ENCODE measurements at regions of chr1 and their contacts with region 1.

Region 1: DNA sequence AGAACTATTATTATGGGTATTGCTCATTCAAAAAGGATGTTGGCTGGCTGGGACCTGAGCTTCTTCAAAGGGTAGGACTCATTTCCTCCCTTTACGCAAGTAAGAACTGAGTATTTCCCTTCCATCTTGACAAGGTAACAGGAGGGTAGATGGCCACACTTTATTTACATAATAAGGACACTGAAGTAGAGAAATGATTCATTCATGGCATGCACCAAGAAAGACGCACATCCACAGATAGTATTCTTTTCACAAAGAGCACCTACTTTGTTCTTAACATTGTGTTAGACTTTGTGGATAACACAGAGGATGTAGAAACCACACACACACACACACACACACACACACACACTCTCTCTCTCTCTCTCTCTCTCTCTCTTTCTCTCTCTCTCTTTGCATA is 82.9 kb downstream of the FAM78B start:
- DNase-seq: peak in 3 of 5 donors; percentile 16 to 30 (median 23)
- H3K4me3 ChIP-seq: no peak overlapping the region
- H3K4me3 Mint-ChIP-seq: peak overlapping the region; percentile 14 to 76 (median 63)
- H3K27ac ChIP-seq: no peak overlapping the region
- H3K27ac Mint-ChIP-seq: peak overlapping the region in 5 of 7 donors; percentile 2 to 92 (median 68)
- H3K4me1 ChIP-seq: peaks cover 43% of the 10 kb centered on the region
- H3K4me1 Mint-ChIP-seq: peaks cover 36 to 66% (median 43%) of the 10 kb centered on the region in 4 donors
- H3K27me3 ChIP-seq: no peaks in the 10 kb centered on the region
- H3K27me3 Mint-ChIP-seq: no peaks in the 10 kb centered on the region

Region 2: GRCh38 chr1:166133276-166133841 is 49.5 kb after region 1 on chr1:
- CTCF ChIA-PET with region 1: no interaction called
- POLR2A ChIA-PET with region 1: no interaction called
- intact Hi-C with region 1: no loop called
- DNase-seq: no peak
- H3K4me3 ChIP-seq: no peak overlapping the region
- H3K4me3 Mint-ChIP-seq: no peak overlapping the region
- H3K27ac ChIP-seq: no peak overlapping the region
- H3K27ac Mint-ChIP-seq: no peak overlapping the region
- H3K4me1 ChIP-seq: no peaks in the 10 kb centered on the region
- H3K4me1 Mint-ChIP-seq: peaks cover 0 to 1% (median 0%) of the 10 kb centered on the region in 4 donors
- H3K27me3 ChIP-seq: no peaks in the 10 kb centered on the region
- H3K27me3 Mint-ChIP-seq: peaks cover 3 to 4% of the 10 kb centered on the region in 2 donors

Region 3: GRCh38 chr1:166166695-166167571 is 83.0 kb after region 1 on chr1 and contains the start of gene FAM78B:
- CTCF ChIA-PET with region 1: interaction called, 3 read pairs
- POLR2A ChIA-PET with region 1: no interaction called
- intact Hi-C with region 1: loop called (anchors 5 kb)
- DNase-seq: peak; percentile 48 to 53 (median 51)
- H3K4me3 ChIP-seq: peak within 1 kb of the TSS in 1 of 2 donors; percentile 8
- H3K4me3 Mint-ChIP-seq: peak within 1 kb of the TSS; percentile 79 to 87 (median 81)
- H3K27ac ChIP-seq: no peak within 1 kb of the TSS
- H3K27ac Mint-ChIP-seq: peak within 1 kb of the TSS in 4 of 7 donors; percentile 8 to 44 (median 31)
- H3K4me1 ChIP-seq: peaks cover 14% of the 10 kb centered on the region
- H3K4me1 Mint-ChIP-seq: peaks cover 8 to 16% (median 12%) of the 10 kb centered on the region in 4 donors
- H3K27me3 ChIP-seq: peaks cover 12% of the 10 kb centered on the region
- H3K27me3 Mint-ChIP-seq: peaks cover 17% of the 10 kb centered on the region in 2 donors
- total RNA-seq, gene FAM78B: 0.22 to 0.32 TPM